HepG2 (cell line): ENCODE measurements at regions of chr16 and their contacts with region 1.

Region 1: DNA sequence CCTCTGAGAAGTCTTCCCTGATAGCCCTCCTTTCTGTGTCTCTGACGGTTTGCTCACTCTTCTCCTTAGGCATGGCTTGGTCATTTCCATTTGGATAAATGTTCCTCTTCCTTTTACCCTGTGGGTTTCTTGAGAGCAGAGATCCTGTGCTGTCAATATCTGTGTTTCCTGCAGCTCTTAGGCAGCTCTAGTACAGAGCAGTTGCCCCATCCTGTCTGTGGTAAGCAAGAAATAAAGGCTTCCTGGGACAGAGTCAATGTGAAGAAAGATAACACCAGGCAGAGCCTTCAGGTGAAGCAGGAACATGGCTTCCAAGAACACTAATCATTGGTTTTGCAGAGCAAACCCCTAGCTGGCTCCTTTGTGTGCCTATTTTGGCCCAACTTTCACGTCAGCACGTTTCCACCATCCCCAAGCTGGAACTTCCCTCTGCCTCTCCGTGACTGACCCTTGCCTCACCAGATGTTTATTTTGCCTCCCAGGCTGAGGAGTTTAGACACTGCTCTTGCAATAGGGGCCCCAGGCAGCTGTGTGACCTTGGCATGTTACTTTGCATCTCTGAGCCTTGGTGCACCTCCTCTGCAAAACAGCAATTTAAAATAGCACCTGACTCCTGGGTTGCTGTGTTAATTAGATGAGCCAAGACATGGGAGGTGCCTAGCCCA is 49.6 kb upstream of the SIAH1 start:
- DNase-seq: no peak
- ATAC-seq: peak; percentile 61
- H3K4me3 ChIP-seq: peak overlapping the region in 1 of 3 experiments; percentile 24; a peak in 2 of 6 replicates
- H3K27ac ChIP-seq: no peak overlapping the region
- H3K4me1 ChIP-seq: peaks cover 30% of the 10 kb centered on the region
- H3K27me3 ChIP-seq: peaks cover 2 to 12% of the 10 kb centered on the region in 2 experiments; a peak in 4 of 5 replicates
- CTCF ChIP-seq: no peak
- EP300 ChIP-seq: peak in 1 of 2 experiments; percentile 25; a peak in 1 of 4 replicates
- POLR2A ChIP-seq: no peak
- RAD21 ChIP-seq: no peak

Region 2: GRCh38 chr16:48353565-48354163 is 81.1 kb before region 1 on chr16:
- CTCF ChIA-PET with region 1: interaction called, 8 read pairs
- POLR2A ChIA-PET with region 1: no interaction called
- in situ Hi-C with region 1: no loop called
- intact Hi-C with region 1: loop called (anchors 1 kb)
- DNase-seq: peak; percentile 78
- ATAC-seq: peak; percentile 89
- H3K4me3 ChIP-seq: no peak overlapping the region
- H3K27ac ChIP-seq: no peak overlapping the region
- H3K4me1 ChIP-seq: no peaks in the 10 kb centered on the region
- H3K27me3 ChIP-seq: no peaks in the 10 kb centered on the region
- CTCF ChIP-seq: peak; percentile 90
- EP300 ChIP-seq: no peak
- POLR2A ChIP-seq: peak in 1 of 2 experiments; percentile 35; a peak in 1 of 4 replicates
- RAD21 ChIP-seq: peak; percentile 90